Activated CD8-positive, alpha-beta T cell treated with anti-CD3 and anti-CD28 coated beads for 36 hours (primary cell): ENCODE measurements at regions of chr1 and their contacts with region 1.

Region 1: DNA sequence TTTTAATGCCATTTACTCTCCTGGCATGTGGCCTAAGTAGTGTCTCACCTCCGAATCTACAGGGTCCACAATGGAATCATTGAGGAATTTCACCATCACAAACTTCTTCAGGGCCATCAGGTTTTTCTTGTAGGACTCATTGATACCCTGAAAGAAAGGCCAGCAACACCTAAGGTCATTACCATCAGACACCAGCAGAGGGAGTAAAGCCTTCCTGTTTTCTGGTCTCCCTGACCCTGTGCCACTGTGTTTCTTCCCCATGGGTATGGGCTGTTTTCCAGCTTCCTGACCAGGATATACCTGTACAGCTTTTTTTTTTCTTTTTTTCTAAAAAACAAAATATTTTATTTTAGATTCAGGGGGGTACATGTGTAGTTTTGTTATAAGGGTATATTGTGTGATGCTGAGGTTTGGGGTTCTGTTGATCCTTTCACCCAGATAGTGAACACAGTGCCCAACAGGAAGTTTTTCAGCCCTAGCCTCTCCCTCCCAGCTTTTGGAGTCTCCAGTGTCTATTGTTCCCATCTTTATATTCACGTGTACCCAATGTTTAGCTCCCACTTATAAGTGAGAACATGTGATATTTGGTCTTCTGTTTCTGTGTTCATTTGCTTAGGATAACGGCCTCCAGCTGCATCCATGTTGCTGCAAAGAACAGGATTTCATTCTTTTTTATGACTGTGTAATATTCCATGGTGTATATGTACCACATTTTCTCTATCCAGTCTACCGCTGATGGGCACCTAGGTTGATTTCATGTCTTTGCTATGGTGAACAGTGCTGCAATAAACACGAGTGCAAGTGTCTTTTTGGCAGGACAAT is 18.3 kb downstream of the PPT1 start:
- DNase-seq: peak; percentile 62
- ATAC-seq: peak; percentile 94
- H3K4me3 Mint-ChIP-seq: no peak overlapping the region
- H3K27ac Mint-ChIP-seq: peak overlapping the region; percentile 20
- H3K4me1 Mint-ChIP-seq: peaks cover 5% of the 10 kb centered on the region
- H3K27me3 Mint-ChIP-seq: no peaks in the 10 kb centered on the region
- CTCF ChIP-seq: peak; percentile 90

Region 2: DNA sequence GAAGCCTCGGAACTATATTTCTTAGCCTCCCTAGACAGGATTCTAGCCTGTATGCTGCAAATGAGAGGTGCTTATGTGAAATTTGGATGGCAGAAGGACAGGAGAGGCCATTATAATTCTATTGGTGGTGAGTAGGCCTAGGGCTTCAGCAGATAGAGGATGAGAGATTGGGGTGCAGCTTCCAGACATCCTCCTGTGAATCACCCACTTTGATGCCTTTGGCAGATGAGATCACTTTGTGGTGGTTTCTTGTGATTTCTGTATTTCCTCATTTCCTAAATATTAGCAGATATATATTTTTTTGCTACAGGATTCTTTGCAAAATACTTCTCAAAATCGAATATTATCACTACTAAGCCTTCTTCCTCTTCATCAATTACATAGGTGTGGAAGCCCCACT is 86.5 kb before region 1 on chr1:
- CTCF ChIA-PET with region 1: no interaction called
- POLR2A ChIA-PET with region 1: no interaction called
- intact Hi-C with region 1: no loop called
- DNase-seq: no peak
- ATAC-seq: no peak
- H3K4me3 Mint-ChIP-seq: no peak overlapping the region
- H3K27ac Mint-ChIP-seq: no peak overlapping the region
- H3K4me1 Mint-ChIP-seq: peaks cover 17% of the 10 kb centered on the region
- H3K27me3 Mint-ChIP-seq: no peaks in the 10 kb centered on the region
- CTCF ChIP-seq: no peak

Region 3: GRCh38 chr1:40059338-40059959 is 19.3 kb before region 1 on chr1:
- CTCF ChIA-PET with region 1: interaction called, 27 read pairs
- POLR2A ChIA-PET with region 1: interaction called, 48 read pairs
- intact Hi-C with region 1: no loop called
- DNase-seq: peak; percentile 57
- ATAC-seq: peak; percentile 72
- H3K4me3 Mint-ChIP-seq: peak overlapping the region; percentile 53
- H3K27ac Mint-ChIP-seq: peak overlapping the region; percentile 91
- H3K4me1 Mint-ChIP-seq: peaks cover 89% of the 10 kb centered on the region
- H3K27me3 Mint-ChIP-seq: no peaks in the 10 kb centered on the region
- CTCF ChIP-seq: peak; percentile 38

Region 4: DNA sequence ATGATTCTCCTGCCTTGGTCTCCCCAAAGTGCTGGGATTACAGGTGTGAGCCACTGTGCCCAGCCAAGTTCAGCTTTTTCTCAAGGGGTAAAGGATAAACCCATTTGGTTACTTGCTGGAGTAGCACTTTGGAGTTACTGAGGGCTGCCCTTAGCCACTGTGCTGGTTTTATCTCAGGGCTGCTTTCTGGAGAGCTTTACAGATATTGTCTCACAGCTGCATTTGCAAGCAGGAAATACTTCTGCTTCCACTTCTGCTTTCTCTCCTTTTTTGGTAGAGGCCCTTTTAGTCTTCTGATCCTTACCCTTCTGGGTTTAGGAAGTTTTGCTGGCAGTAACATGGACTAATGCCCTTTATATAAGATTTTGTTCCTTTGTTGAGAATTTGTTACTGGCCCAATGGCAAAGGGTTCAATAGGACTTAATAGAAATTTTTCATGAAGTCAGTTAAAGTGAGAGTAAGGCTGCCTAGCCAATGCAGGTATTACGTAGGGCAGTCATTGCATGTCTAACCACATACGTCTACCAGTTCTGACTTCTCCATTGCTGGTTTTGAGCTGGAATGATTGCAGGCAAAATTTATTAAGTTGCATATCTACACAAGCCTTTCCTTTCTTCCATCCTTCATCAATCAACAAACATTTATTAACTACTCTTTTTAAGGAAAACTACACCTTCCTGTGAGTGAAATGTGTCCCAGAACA is 13.8 kb before region 1 on chr1:
- CTCF ChIA-PET with region 1: interaction called, 27 read pairs
- POLR2A ChIA-PET with region 1: interaction called, 48 read pairs
- intact Hi-C with region 1: no loop called
- DNase-seq: no peak
- ATAC-seq: no peak
- H3K4me3 Mint-ChIP-seq: no peak overlapping the region
- H3K27ac Mint-ChIP-seq: peak overlapping the region; percentile 80
- H3K4me1 Mint-ChIP-seq: peaks cover 67% of the 10 kb centered on the region
- H3K27me3 Mint-ChIP-seq: no peaks in the 10 kb centered on the region
- CTCF ChIP-seq: no peak

Region 5: DNA sequence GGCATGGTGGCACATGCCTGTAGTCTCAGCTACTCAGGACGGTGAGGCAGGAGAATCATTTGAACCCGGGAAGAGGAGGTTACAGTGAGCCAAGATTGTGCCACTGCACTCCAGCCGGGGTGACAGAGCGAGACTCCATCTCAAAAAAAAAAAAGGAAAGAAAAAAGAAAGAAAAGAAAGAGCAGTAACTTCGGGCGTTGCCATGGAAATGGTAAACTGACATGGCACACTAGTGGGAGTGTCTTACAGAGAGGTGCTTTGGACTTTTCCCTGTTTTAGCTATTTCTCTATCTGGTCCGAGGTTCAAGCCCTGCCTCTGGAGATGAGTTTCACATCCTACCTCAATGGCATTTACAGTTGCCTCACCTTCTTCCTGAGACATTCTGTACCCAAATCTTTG is 41.4 kb after region 1 on chr1:
- CTCF ChIA-PET with region 1: no interaction called
- POLR2A ChIA-PET with region 1: no interaction called
- intact Hi-C with region 1: no loop called
- DNase-seq: no peak
- ATAC-seq: no peak
- H3K4me3 Mint-ChIP-seq: no peak overlapping the region
- H3K27ac Mint-ChIP-seq: no peak overlapping the region
- H3K4me1 Mint-ChIP-seq: no peaks in the 10 kb centered on the region
- H3K27me3 Mint-ChIP-seq: peaks cover 9% of the 10 kb centered on the region
- CTCF ChIP-seq: no peak

Region 6: GRCh38 chr1:40130892-40131291 is 52.2 kb after region 1 on chr1:
- CTCF ChIA-PET with region 1: no interaction called
- POLR2A ChIA-PET with region 1: no interaction called
- intact Hi-C with region 1: no loop called
- DNase-seq: no peak
- ATAC-seq: no peak
- H3K4me3 Mint-ChIP-seq: no peak overlapping the region
- H3K27ac Mint-ChIP-seq: no peak overlapping the region
- H3K4me1 Mint-ChIP-seq: no peaks in the 10 kb centered on the region
- H3K27me3 Mint-ChIP-seq: peaks cover 6% of the 10 kb centered on the region
- CTCF ChIP-seq: no peak